PC-9 (cell line): ENCODE measurements at regions of chr12 and their contacts with region 1.

Region 1: DNA sequence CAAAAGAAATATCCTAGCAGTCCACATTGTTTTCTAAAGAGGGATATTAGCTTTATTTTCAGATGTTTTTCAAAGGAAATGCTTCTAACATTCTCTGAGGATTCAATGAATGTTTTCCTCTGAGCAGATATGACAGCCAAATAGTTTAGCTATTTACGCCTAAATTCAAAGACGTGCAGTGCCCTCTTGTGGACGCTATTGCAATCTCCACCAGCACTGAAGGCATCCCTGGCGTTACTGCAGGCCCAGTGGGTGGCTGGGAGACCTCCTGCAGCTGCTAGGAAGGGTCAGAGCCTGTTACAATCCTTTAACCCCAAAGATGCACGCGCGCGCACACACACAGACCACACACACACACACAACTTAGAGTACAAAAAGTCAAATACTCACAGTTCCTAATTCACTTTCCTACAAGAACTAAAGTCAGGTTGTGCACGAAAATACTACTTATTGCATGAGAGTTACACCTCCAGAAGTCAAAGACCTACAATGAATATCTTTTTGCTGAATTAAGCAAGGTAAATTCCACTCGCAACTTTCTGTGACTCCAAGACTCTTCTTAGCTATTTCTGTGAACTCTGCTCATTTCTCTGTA is 589.3 kb upstream of the TMEM132C start:
- DNase-seq: peak in 1 of 2 experiments; percentile 46
- H3K4me3 ChIP-seq: no peak overlapping the region
- H3K27ac ChIP-seq: no peak overlapping the region
- H3K4me1 ChIP-seq: no peaks in the 10 kb centered on the region
- H3K27me3 ChIP-seq: peaks cover 7% of the 10 kb centered on the region; the same call in 1 of the 2 replicates
- CTCF ChIP-seq: peak; percentile 74

Region 2: GRCh38 chr12:127355061-127355841 is 322.4 kb before region 1 on chr12:
- CTCF ChIA-PET with region 1: no interaction called
- POLR2A ChIA-PET with region 1: no interaction called
- intact Hi-C with region 1: no loop called
- DNase-seq: no peak
- H3K4me3 ChIP-seq: no peak overlapping the region
- H3K27ac ChIP-seq: no peak overlapping the region
- H3K4me1 ChIP-seq: no peaks in the 10 kb centered on the region
- H3K27me3 ChIP-seq: no peaks in the 10 kb centered on the region
- CTCF ChIP-seq: peak; percentile 44; the same call in 1 of the 2 replicates

Region 3: DNA sequence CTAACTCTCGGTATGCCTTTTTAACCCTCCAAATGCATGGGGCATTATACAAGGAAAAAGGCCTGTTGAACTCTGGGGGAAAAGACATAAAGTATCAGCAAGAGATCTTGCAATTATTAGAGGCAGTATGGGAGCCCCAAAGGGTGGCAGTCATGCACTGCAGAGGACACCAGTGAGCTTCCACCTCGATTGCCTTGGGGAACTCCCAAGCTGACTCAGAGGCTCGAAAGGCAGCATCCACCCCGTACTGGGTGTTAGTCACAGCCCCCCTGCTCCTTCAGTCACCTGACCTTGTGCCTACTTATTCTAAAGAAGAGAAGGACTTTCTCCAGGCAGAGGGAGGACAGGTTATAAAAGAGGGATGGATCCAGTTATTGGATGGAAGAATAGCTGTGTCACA is 192.1 kb before region 1 on chr12:
- CTCF ChIA-PET with region 1: no interaction called
- POLR2A ChIA-PET with region 1: no interaction called
- intact Hi-C with region 1: loop called (anchors 1 kb)
- DNase-seq: peak in 1 of 2 experiments; percentile 30
- H3K4me3 ChIP-seq: no peak overlapping the region
- H3K27ac ChIP-seq: no peak overlapping the region
- H3K4me1 ChIP-seq: no peaks in the 10 kb centered on the region
- H3K27me3 ChIP-seq: peaks cover 3% of the 10 kb centered on the region; the same call in 1 of the 2 replicates
- CTCF ChIP-seq: no peak

Region 4: GRCh38 chr12:127711108-127711507 is 33.5 kb after region 1 on chr12:
- CTCF ChIA-PET with region 1: no interaction called
- POLR2A ChIA-PET with region 1: no interaction called
- intact Hi-C with region 1: no loop called
- DNase-seq: no peak
- H3K4me3 ChIP-seq: no peak overlapping the region
- H3K27ac ChIP-seq: no peak overlapping the region
- H3K4me1 ChIP-seq: no peaks in the 10 kb centered on the region
- H3K27me3 ChIP-seq: no peaks in the 10 kb centered on the region
- CTCF ChIP-seq: peak; percentile 59